Activated CD4-positive, alpha-beta memory T cell treated with anti-CD3 and anti-CD28 coated beads for 36 hours (primary cell): ENCODE measurements at regions of chr7 and their contacts with region 1.

Region 1: GRCh38 chr7:106187613-106188350 is 75.7 kb upstream of the SYPL1 start:
- DNase-seq: no peak
- H3K4me3 Mint-ChIP-seq: no peak overlapping the region
- H3K27ac Mint-ChIP-seq: no peak overlapping the region
- H3K4me1 Mint-ChIP-seq: no peaks in the 10 kb centered on the region
- H3K27me3 Mint-ChIP-seq: peaks cover 9% of the 10 kb centered on the region

Region 2: DNA sequence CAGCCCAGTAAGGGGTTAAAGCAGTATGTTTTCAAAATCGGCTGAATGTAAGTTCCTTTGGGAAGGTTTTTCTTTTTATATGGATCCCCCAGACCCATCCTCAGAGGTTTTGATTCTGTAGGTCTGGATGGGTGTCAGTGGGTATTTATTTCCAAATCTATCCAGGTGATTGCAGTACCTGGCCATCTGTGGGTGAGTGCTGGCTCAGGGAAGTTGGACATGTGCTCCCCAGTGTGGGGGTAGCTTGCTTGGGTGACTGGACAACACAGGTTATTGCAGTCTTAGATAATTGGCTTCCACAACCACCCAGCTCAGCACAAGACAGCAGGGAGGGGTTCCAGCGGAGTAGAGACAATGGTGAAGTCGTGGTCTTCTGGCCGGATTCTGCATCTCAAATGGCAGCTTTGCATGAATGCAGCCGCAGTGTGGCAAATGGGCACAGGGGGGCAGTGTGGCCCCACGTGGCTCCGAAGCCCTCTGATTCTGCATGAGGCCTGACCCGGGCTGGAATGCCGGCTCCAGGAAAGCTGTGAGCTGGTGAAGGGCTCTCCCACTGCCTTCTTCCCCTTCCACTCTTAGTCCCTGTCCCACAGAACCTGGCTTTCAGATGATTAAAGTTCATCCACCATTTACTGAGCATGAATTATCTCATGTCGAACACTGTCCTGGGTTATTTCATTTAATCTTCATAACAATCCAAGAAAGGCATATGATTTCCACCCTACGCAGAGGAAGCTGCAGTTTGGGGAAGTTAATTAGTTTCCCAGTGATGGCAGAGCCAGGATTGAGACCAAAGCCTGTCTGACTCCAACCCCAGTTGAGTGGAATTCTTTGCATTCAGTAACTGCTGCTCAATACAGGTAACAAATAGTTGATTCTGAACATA is 11.1 kb before region 1 on chr7:
- CTCF ChIA-PET with region 1: interaction called, 10 read pairs
- POLR2A ChIA-PET with region 1: no interaction called
- intact Hi-C with region 1: no loop called
- DNase-seq: peak; percentile 80
- H3K4me3 Mint-ChIP-seq: no peak overlapping the region
- H3K27ac Mint-ChIP-seq: no peak overlapping the region
- H3K4me1 Mint-ChIP-seq: peaks cover 5% of the 10 kb centered on the region
- H3K27me3 Mint-ChIP-seq: peaks cover 13% of the 10 kb centered on the region

Region 3: GRCh38 chr7:106205621-106206222 is 17.9 kb after region 1 on chr7:
- CTCF ChIA-PET with region 1: no interaction called
- POLR2A ChIA-PET with region 1: no interaction called
- intact Hi-C with region 1: no loop called
- DNase-seq: no peak
- H3K4me3 Mint-ChIP-seq: no peak overlapping the region
- H3K27ac Mint-ChIP-seq: no peak overlapping the region
- H3K4me1 Mint-ChIP-seq: peaks cover 7% of the 10 kb centered on the region
- H3K27me3 Mint-ChIP-seq: peaks cover 33% of the 10 kb centered on the region

Region 4: GRCh38 chr7:106448992-106449859 is 261.4 kb after region 1 on chr7:
- CTCF ChIA-PET with region 1: no interaction called
- POLR2A ChIA-PET with region 1: no interaction called
- intact Hi-C with region 1: no loop called
- DNase-seq: no peak
- H3K4me3 Mint-ChIP-seq: no peak overlapping the region
- H3K27ac Mint-ChIP-seq: no peak overlapping the region
- H3K4me1 Mint-ChIP-seq: peaks cover 9% of the 10 kb centered on the region
- H3K27me3 Mint-ChIP-seq: peaks cover 8% of the 10 kb centered on the region